ENCODE measurements at regions of chr2 and their contacts with region 1.

Region 1: GRCh38 chr2:85420536-85421259 is 2.2 kb downstream of the SH2D6 start:
- DNase-seq: peak; percentile 85
- H3K4me3 Mint-ChIP-seq: peak overlapping the region; percentile 70
- H3K27ac Mint-ChIP-seq: peak overlapping the region; percentile 86
- H3K4me1 Mint-ChIP-seq: peaks cover 25% of the 10 kb centered on the region
- H3K27me3 Mint-ChIP-seq: no peaks in the 10 kb centered on the region

Region 2: DNA sequence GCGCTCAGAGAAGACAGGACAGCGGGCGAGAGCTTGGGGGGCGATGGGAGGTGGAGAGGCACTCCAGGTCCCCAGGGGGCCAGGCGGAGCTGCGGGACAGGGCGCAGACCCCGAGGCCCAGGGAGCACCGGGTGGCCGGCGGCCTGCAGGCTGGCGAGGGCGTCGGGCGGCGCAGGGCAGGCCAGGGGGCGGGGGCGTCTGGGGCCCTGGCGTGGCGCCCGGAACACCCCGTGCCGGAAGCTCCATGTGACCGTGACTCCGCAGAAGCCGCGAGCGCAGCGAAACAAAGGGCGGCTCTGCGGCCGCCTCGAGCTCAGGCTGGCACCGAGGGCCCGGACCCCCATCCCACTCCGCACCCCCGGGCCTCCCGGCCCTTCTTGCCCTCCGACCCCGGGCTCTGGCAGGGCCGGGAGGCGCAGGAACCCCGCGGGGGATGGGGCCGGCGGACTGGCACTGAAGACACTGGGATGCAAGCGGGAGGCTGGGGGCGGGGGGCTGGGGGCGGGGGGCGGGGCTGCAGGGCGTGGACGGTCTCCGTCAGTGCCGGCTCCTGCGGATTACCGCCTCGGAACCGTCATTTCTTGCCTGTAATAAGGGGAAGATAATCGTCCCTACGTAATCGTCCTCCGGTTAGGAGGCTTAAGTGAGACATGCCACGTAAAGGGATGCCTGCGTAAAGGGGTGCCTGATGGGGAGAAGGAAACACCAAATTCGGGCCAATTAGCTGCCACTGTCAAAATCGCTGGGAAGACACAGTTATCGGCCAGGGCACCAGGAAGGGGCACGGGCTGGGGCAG is 17.0 kb after region 1 on chr2:
- intact Hi-C with region 1: loop called (anchors 2 kb)
- DNase-seq: peak; percentile 70
- H3K4me3 Mint-ChIP-seq: peak overlapping the region; percentile 82
- H3K27ac Mint-ChIP-seq: peak overlapping the region; percentile 98
- H3K4me1 Mint-ChIP-seq: peaks cover 28% of the 10 kb centered on the region
- H3K27me3 Mint-ChIP-seq: no peaks in the 10 kb centered on the region

Region 3: DNA sequence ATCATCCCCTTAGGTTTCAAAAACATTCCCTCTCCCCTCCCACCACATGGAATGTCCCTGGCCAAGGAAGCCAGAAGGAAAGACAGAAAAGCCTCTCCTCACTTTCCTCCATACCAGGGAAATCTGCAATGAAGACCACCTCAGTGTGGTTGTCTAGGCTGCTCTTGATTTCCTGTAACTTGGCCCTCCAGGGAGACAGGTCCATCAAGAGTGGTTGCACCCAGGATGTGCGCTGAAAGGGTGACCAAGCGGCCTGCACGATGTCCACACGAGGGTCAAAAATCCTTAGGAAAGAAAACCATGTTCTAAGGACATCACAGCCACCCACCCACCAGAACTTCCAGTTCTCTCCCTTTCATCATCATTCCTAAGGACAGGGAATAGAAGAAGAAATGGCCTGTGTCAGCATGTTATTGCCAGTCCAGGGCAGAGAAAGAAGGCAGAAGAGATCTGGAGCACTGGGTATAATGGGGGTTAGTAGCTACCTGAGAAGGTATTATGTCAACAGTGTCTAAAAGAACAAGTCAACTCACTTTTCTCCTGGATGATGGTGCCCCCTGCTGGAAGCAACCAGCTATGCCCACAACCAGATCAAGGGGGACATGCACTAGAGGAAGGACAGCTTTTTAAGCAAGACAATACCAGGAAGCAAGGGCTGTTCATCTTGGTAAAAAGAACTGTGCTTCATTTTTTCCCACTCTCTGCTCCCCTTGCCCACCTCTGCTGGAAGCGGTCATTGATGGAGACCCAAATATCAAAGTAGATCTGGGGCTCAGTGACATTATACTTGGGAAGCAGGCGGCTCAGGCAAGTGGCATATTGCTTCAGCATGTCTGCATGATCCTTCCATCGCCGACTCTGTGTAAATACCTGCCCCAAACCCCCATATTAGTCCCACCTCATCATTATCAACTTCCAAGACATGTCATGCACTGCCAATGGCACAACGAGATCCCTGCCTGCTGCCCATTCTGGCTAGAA is 131.3 kb after region 1 on chr2:
- intact Hi-C with region 1: loop called (anchors 1 kb)
- DNase-seq: peak; percentile 80
- H3K4me3 Mint-ChIP-seq: no peak overlapping the region
- H3K27ac Mint-ChIP-seq: no peak overlapping the region
- H3K4me1 Mint-ChIP-seq: peaks cover 3% of the 10 kb centered on the region
- H3K27me3 Mint-ChIP-seq: no peaks in the 10 kb centered on the region

Region 4: DNA sequence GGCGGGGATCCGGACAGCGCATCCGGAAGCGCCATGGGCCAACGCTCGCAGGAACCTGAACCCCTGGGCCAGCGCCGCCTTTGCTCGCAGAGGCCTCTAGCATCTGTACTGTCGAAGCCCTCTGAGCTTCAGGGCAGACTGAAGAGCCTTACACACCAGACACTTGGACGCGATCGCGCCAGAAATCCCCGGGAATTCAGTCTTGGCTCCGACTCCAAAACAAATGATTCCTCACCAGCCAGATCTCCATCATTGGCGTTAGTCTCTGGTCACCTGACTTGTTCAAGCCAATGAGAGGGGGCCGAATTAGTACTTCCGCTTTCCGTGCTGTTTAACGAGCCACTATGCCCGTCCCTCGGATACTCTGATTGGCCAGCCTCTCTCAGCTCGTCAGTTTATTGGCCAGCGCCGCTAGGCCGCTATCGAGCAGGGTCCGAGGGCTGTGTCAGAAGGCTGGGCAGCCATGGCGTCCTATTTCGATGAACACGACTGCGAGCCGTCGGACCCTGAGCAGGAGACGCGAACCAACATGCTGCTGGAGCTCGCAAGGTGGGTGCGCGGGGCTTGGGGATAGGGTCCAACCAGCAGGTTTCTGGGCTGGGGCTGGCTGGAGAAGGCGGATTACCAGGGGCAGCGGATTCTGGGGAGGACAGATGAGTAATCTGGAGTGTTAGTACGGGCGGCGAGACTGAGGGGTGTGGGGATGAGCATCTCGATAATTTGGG is 174.8 kb after region 1 on chr2 and contains the start of gene RNF181:
- intact Hi-C with region 1: loop called (anchors 5 kb)
- DNase-seq: peak; percentile 91
- H3K4me3 Mint-ChIP-seq: peak within 1 kb of the TSS; percentile 96
- H3K27ac Mint-ChIP-seq: peak within 1 kb of the TSS; percentile 96
- H3K4me1 Mint-ChIP-seq: peaks cover 18% of the 10 kb centered on the region
- H3K27me3 Mint-ChIP-seq: no peaks in the 10 kb centered on the region
- total RNA-seq, gene RNF181: 130 and 134 TPM in 2 replicates